ENCODE measurements at regions of chr15 and their contacts with region 1.

Region 1: GRCh38 chr15:74540761-74541493 is at the start of gene ARID3B:
- DNase-seq: peak; percentile 97
- H3K4me3 Mint-ChIP-seq: peak within 1 kb of the TSS; percentile 99
- H3K27ac Mint-ChIP-seq: peak within 1 kb of the TSS; percentile 96
- H3K4me1 Mint-ChIP-seq: peaks cover 58% of the 10 kb centered on the region
- H3K27me3 Mint-ChIP-seq: no peaks in the 10 kb centered on the region
- total RNA-seq, gene ARID3B: 49.2 to 52.1 TPM

Region 2: DNA sequence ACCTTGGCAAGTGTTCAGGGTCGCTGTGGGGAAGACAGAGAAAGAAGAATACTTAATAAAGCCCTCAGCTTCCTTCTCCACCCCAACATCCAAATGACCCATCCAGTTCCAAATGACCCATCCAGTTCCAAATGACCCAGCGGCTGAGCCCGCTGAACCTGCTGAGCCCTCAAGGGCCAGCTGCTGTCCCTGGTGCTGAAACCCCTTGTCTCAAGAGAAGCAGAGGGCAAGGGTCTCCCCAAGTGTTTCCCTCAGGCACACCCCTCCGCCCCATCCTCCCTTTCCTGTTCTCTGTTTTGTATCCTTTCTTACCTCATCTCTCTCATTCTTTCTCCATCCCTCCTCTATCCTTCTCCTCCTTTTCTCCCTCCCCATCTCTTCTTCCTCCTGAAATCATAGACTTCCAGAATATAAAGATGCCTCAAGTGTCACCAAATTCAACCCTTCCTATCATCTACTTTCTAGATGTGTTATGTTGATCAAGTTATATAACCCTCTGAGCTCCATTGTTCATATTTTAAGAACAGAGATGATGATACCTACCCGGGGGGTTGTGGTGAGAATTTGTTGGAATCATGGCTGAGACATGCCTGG is 275.8 kb before region 1 on chr15:
- CTCF ChIA-PET with region 1: no interaction called
- POLR2A ChIA-PET with region 1: no interaction called
- DNase-seq: peak; percentile 35
- H3K4me3 Mint-ChIP-seq: no peak overlapping the region
- H3K27ac Mint-ChIP-seq: no peak overlapping the region
- H3K4me1 Mint-ChIP-seq: no peaks in the 10 kb centered on the region
- H3K27me3 Mint-ChIP-seq: peaks cover 15% of the 10 kb centered on the region

Region 3: GRCh38 chr15:74460871-74461846 is 79.8 kb before region 1 on chr15 and contains the start of gene UBL7:
- CTCF ChIA-PET with region 1: interaction called, 4 read pairs
- POLR2A ChIA-PET with region 1: interaction called, 42 read pairs
- DNase-seq: peak; percentile 99
- H3K4me3 Mint-ChIP-seq: peak within 1 kb of the TSS; percentile 93
- H3K27ac Mint-ChIP-seq: peak within 1 kb of the TSS; percentile 80
- H3K4me1 Mint-ChIP-seq: peaks cover 50% of the 10 kb centered on the region
- H3K27me3 Mint-ChIP-seq: no peaks in the 10 kb centered on the region
- total RNA-seq, gene UBL7: 54.7 to 61.3 TPM

Region 4: DNA sequence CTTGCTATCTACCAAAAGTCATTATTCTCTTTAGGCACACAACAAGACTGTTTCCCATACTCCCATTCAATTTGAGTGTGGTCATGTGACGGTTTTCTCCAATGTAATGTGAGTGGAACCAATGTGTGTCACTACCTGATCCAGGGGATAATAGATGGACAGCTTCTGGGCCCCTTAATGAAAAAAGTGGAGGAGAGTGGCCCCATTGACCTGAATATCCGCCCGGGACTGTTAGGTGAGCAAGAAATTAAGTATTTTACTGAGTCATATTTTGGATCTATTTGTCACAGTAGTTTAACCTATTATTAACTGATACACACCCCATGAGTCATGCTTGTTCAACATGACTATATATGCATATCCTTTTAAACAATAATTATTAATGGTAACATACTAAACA is 15.0 kb before region 1 on chr15:
- CTCF ChIA-PET with region 1: no interaction called
- POLR2A ChIA-PET with region 1: interaction called, 10 read pairs
- DNase-seq: no peak
- H3K4me3 Mint-ChIP-seq: no peak overlapping the region
- H3K27ac Mint-ChIP-seq: no peak overlapping the region
- H3K4me1 Mint-ChIP-seq: no peaks in the 10 kb centered on the region
- H3K27me3 Mint-ChIP-seq: no peaks in the 10 kb centered on the region

Region 5: DNA sequence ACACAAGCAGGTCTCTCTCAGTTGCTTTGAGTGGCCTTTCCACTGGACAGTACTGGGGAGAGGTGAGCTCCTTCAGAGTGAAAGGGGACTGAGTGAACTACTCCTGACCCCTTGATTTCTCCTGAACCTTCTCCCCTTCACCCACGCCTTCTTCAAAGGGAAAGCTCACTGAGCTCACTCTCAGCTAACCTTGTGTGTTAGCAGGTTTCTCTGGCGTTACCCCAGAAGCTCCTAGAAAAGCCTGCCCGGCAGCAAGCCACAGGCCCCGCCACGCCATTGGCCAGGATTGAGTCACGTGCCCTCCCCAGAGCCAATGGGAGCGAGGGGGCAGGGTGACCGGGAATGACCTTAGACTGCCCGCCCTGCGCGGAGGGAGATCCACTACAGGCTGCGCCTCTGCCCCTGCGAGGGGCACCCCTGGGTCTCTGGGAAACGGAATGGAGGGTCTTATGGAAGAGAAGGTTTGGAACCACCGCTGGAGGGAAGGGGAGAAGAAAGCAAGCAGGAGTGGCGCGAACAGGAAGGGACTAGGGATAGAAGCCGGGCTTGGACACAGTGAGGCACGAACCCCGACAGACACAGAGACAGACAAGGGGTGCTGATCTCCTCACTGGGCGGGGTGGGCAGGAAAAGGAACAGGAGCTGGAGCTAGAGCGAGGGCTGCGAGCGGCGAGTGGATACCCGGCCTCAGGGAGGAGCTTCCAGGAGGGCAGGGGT is 57.4 kb after region 1 on chr15:
- CTCF ChIA-PET with region 1: interaction called, 4 read pairs
- POLR2A ChIA-PET with region 1: interaction called, 30 read pairs
- DNase-seq: peak; percentile 92
- H3K4me3 Mint-ChIP-seq: peak overlapping the region; percentile 95
- H3K27ac Mint-ChIP-seq: peak overlapping the region; percentile 95
- H3K4me1 Mint-ChIP-seq: peaks cover 19% of the 10 kb centered on the region
- H3K27me3 Mint-ChIP-seq: no peaks in the 10 kb centered on the region

Region 6: DNA sequence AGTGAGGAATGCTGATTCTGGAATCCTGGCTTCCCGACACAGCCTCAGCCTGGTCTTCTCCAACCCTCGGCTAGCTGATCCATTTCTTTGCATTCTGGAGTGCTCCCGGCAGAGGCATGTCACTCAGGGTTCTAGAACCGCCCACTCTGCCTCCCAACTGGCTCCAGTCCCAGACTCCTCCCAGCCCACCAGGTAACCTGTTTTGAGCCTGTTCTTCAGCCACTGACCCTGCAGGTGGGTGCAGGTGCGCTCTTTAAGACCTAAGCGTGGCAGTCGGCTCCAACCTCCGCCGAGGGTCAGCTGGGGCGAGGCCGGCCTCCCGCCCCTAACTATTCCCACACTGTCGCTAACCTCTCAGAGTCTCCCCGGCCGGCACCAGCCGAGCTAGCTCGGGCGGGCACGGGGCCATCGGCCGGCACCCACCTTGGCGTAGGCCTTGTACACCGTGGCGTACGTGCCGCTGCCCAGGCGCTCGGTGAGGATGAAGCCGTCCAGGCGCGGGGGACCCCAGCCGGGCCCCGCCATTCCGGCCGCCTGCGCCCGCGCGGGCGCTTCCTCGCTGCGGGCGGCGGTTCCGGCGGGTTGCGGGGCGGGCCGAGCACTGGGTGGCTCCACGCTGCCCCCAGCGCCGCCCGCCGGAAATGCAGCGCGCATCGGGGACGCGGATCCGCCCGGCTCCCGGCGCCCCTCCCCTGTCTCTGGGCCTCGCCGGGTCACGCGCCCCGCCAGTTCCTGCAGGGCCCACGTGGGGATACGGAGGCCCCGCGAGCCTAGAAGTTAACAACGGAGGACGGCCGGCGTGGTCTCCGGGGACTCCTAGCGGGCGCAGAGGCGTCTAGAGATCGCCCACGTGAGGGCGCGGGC is 301.9 kb after region 1 on chr15 and contains the start of gene ULK3:
- CTCF ChIA-PET with region 1: no interaction called
- POLR2A ChIA-PET with region 1: interaction called, 11 read pairs
- DNase-seq: peak; percentile 95
- H3K4me3 Mint-ChIP-seq: peak within 1 kb of the TSS; percentile 91
- H3K27ac Mint-ChIP-seq: peak within 1 kb of the TSS; percentile 98
- H3K4me1 Mint-ChIP-seq: peaks cover 63% of the 10 kb centered on the region
- H3K27me3 Mint-ChIP-seq: no peaks in the 10 kb centered on the region
- total RNA-seq, gene ULK3: 74.9 to 84.2 TPM